Caco-2 (cell line): ENCODE measurements at regions of chr1 and their contacts with region 1.

Region 1: DNA sequence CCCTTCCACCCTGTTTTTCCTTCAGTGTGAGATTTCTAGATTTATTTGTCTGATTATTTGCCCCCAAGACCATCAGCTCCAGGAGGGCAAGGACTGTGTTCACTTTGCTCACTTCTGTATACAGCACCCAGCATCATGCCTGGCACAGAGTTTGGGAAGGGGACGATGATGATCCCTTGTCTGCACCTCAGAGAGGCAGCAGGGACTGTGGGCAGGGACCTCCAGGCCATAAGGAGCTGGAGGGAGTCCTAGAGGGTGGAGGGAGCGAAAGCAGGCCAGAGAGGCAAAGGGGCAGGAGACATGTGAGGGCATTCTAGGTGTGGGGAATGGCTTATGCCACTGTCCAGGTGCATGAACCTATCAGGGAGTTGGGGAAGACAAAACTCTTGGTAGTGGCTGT is 32.8 kb downstream of the H3-3A start:
- DNase-seq: no peak
- H3K4me3 ChIP-seq: no peak overlapping the region
- H3K4me3 Mint-ChIP-seq: no peak overlapping the region
- H3K27ac Mint-ChIP-seq: no peak overlapping the region
- H3K4me1 ChIP-seq: peaks cover 8% of the 10 kb centered on the region; the same call in 1 of the 2 replicates
- H3K4me1 Mint-ChIP-seq: peaks cover 12% of the 10 kb centered on the region
- H3K27me3 ChIP-seq: no peaks in the 10 kb centered on the region
- H3K27me3 Mint-ChIP-seq: no peaks in the 10 kb centered on the region
- CTCF ChIP-seq: no peak

Region 2: DNA sequence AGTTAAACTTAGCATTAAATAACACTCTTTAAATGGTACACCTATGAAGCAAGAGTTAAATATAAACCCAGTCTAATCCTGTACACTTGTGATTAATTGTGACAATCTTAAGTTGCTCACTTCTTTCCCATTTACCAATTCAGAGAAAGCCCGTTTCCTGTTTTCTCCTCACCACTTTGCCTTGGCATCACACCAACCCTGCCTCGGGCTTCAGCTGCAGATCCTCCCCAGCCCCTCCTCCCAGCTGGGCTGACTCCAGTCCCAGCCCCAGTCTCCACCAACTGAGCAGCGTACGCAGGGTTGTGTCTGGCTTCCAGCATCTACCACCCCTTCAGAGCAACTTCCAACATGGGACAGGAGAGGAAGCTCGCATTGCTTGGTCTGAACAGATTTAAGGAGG is 175.4 kb before region 1 on chr1:
- CTCF ChIA-PET with region 1: no interaction called
- POLR2A ChIA-PET with region 1: no interaction called
- intact Hi-C with region 1: no loop called
- DNase-seq: no peak
- H3K4me3 ChIP-seq: no peak overlapping the region
- H3K4me3 Mint-ChIP-seq: no peak overlapping the region
- H3K27ac Mint-ChIP-seq: no peak overlapping the region
- H3K4me1 ChIP-seq: no peaks in the 10 kb centered on the region
- H3K4me1 Mint-ChIP-seq: no peaks in the 10 kb centered on the region
- H3K27me3 ChIP-seq: no peaks in the 10 kb centered on the region
- H3K27me3 Mint-ChIP-seq: no peaks in the 10 kb centered on the region
- CTCF ChIP-seq: no peak

Region 3: DNA sequence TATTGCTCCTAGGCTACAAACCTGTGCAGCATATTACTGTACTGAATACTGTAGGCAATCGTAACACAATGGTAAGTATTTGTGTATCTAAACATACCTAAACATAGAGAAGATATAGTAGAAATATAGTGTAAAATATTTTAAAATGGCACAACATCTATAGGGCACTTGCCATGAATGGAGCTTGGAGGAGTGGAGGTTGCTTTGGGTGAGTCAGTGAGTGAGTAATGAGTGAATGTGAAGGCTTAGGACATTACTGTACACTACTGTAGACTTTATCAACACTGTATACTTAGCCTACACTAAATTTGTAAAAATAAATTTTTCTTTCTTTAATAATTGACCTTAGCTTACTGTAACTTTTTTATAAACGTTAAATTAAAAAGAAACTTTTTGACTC is 162.2 kb before region 1 on chr1:
- CTCF ChIA-PET with region 1: no interaction called
- POLR2A ChIA-PET with region 1: no interaction called
- intact Hi-C with region 1: no loop called
- DNase-seq: no peak
- H3K4me3 ChIP-seq: no peak overlapping the region
- H3K4me3 Mint-ChIP-seq: no peak overlapping the region
- H3K27ac Mint-ChIP-seq: no peak overlapping the region
- H3K4me1 ChIP-seq: peaks cover 6% of the 10 kb centered on the region
- H3K4me1 Mint-ChIP-seq: peaks cover 7% of the 10 kb centered on the region
- H3K27me3 ChIP-seq: no peaks in the 10 kb centered on the region
- H3K27me3 Mint-ChIP-seq: no peaks in the 10 kb centered on the region
- CTCF ChIP-seq: no peak

Region 4: DNA sequence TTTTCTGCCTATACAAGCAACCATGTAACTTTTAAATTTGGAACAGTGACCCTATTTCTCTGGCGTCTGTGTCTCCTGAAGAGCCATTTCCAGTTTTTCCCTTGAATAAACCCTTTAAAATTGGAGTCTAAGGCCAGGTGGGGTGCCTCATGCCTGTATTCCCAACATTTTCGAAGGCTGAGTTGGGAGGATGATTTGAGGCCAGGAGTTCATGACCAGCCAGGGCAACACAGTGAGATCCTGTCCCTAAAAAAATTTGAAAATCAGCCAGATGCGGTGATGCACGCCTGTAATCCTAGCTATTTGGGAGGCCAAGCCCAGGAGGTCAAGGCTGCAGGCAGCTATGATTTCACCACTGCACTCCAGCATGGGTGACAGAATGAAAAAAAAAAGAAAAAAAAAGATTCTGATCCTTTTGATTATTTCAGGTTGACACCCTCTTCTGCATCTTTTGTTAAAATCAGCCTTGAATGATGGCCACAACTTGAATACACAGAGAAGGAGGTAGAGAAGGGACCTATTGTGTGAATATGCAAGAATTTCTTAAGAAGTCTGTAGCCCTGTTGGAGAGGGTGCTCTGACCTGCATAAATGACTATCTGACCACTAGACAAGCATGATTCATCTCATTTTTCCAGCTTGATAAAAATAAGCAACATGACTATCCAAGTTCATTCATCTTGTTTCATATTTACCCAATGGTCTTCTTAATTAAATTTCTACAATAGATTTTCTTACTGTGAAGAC is 352.8 kb after region 1 on chr1:
- CTCF ChIA-PET with region 1: no interaction called
- POLR2A ChIA-PET with region 1: no interaction called
- intact Hi-C with region 1: no loop called
- DNase-seq: no peak
- H3K4me3 ChIP-seq: no peak overlapping the region
- H3K4me3 Mint-ChIP-seq: no peak overlapping the region
- H3K27ac Mint-ChIP-seq: no peak overlapping the region
- H3K4me1 ChIP-seq: no peaks in the 10 kb centered on the region
- H3K4me1 Mint-ChIP-seq: no peaks in the 10 kb centered on the region
- H3K27me3 ChIP-seq: no peaks in the 10 kb centered on the region
- H3K27me3 Mint-ChIP-seq: peaks cover 6% of the 10 kb centered on the region
- CTCF ChIP-seq: no peak

Region 5: DNA sequence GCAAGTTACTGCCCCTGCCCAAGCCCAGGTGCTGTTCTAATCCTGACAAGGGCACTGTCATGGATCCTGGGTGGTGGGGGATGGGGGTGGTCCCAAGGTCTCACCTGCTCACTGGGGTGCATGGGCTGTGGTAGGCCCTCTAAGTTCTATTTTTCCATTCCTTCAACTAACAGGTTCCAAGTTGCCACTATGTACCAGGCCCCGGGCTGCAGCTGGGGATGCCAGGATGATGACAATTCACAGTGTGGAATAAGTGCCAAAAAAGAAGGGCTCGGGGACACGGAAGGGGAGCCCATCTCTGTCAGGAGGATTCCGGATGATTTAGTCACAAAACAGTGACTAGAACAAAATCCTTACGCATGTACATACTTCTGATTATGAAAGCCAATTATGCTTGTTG is 529.2 kb after region 1 on chr1:
- CTCF ChIA-PET with region 1: interaction called, 13 read pairs
- POLR2A ChIA-PET with region 1: no interaction called
- intact Hi-C with region 1: no loop called
- DNase-seq: no peak
- H3K4me3 ChIP-seq: no peak overlapping the region
- H3K4me3 Mint-ChIP-seq: no peak overlapping the region
- H3K27ac Mint-ChIP-seq: no peak overlapping the region
- H3K4me1 ChIP-seq: no peaks in the 10 kb centered on the region
- H3K4me1 Mint-ChIP-seq: peaks cover 12% of the 10 kb centered on the region
- H3K27me3 ChIP-seq: no peaks in the 10 kb centered on the region
- H3K27me3 Mint-ChIP-seq: no peaks in the 10 kb centered on the region
- CTCF ChIP-seq: no peak